ENCODE measurements at regions of chr3 and their contacts with region 1.

Region 1: DNA sequence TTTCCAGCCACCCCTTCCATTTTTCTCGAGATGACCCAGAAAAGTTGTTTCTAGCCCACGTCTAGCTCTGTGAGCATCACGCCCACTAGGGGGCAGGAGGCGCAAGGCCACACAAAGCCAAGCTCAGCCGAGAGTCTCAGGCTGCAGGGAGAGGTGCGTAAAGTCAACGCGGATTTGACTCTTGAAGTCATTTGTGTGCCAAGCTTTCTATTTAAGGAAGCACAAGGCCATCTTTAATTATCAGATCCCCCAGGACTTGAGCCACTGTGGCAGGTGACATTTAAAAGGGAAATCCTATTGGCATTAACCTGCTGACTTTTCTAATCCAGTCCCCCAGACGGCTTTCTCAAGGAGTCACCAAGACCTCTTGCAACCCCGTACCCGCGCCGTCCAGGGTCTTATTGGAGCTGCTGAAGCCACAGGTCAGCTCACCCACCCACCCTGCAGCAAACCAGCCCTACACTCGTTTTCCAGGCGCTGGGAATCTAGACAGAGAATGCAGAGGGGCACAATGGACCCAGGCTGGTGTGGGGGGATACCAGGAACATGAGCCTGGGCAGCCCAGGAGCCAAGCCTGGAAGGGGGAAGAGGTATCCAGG is 62.1 kb downstream of the CAPN7 start:
- DNase-seq: peak; percentile 69 to 92 (median 87)
- ATAC-seq: peak; percentile 50
- H3K4me3 ChIP-seq: no peak overlapping the region
- H3K4me3 Mint-ChIP-seq: no peak overlapping the region
- H3K27ac ChIP-seq: peak overlapping the region in 1 of 2 experiments; percentile 77
- H3K27ac Mint-ChIP-seq: no peak overlapping the region
- H3K4me1 ChIP-seq: peaks cover 64% of the 10 kb centered on the region
- H3K4me1 Mint-ChIP-seq: peaks cover 57% of the 10 kb centered on the region
- H3K27me3 ChIP-seq: no peaks in the 10 kb centered on the region
- H3K27me3 Mint-ChIP-seq: no peaks in the 10 kb centered on the region
- CTCF ChIP-seq: peak; percentile 83

Region 2: GRCh38 chr3:15205934-15206661 is 62.0 kb before region 1 on chr3 and contains the start of gene CAPN7:
- CTCF ChIA-PET with region 1: interaction called, 22 read pairs
- POLR2A ChIA-PET with region 1: interaction called, 10 read pairs
- intact Hi-C with region 1: loop called (anchors 1 to 2 kb)
- DNase-seq: peak; percentile 88 to 98 (median 93)
- ATAC-seq: peak; percentile 91
- H3K4me3 ChIP-seq: peak within 1 kb of the TSS; percentile 79 to 82
- H3K4me3 Mint-ChIP-seq: peak within 1 kb of the TSS; percentile 89
- H3K27ac ChIP-seq: peak within 1 kb of the TSS; percentile 85 to 88
- H3K27ac Mint-ChIP-seq: peak within 1 kb of the TSS; percentile 87
- H3K4me1 ChIP-seq: peaks cover 21% of the 10 kb centered on the region
- H3K4me1 Mint-ChIP-seq: peaks cover 32% of the 10 kb centered on the region
- H3K27me3 ChIP-seq: no peaks in the 10 kb centered on the region
- H3K27me3 Mint-ChIP-seq: no peaks in the 10 kb centered on the region
- CTCF ChIP-seq: no peak
- total RNA-seq, gene CAPN7: 59.7 to 62.6 TPM

Region 3: GRCh38 chr3:15309662-15310335 is 41.7 kb after region 1 on chr3:
- CTCF ChIA-PET with region 1: interaction called, 16 read pairs
- POLR2A ChIA-PET with region 1: no interaction called
- intact Hi-C with region 1: loop called (anchors 5 kb)
- DNase-seq: peak in 1 of 9 experiments; percentile 17
- ATAC-seq: no peak
- H3K4me3 ChIP-seq: no peak overlapping the region
- H3K4me3 Mint-ChIP-seq: no peak overlapping the region
- H3K27ac ChIP-seq: peak overlapping the region in 1 of 2 experiments; percentile 37
- H3K27ac Mint-ChIP-seq: no peak overlapping the region
- H3K4me1 ChIP-seq: peaks cover 33% of the 10 kb centered on the region
- H3K4me1 Mint-ChIP-seq: peaks cover 55% of the 10 kb centered on the region
- H3K27me3 ChIP-seq: no peaks in the 10 kb centered on the region
- H3K27me3 Mint-ChIP-seq: no peaks in the 10 kb centered on the region
- CTCF ChIP-seq: no peak

Region 4: GRCh38 chr3:15332405-15333098 is 64.4 kb after region 1 on chr3 and contains the start of gene SH3BP5:
- CTCF ChIA-PET with region 1: interaction called, 127 read pairs
- POLR2A ChIA-PET with region 1: interaction called, 16 read pairs
- intact Hi-C with region 1: loop called (anchors 1 kb)
- DNase-seq: peak; percentile 46 to 86 (median 75)
- ATAC-seq: peak; percentile 91
- H3K4me3 ChIP-seq: peak within 1 kb of the TSS; percentile 93 to 97
- H3K4me3 Mint-ChIP-seq: peak within 1 kb of the TSS; percentile 91
- H3K27ac ChIP-seq: peak within 1 kb of the TSS; percentile 60 to 67
- H3K27ac Mint-ChIP-seq: peak within 1 kb of the TSS; percentile 90
- H3K4me1 ChIP-seq: peaks cover 37% of the 10 kb centered on the region
- H3K4me1 Mint-ChIP-seq: peaks cover 50% of the 10 kb centered on the region
- H3K27me3 ChIP-seq: no peaks in the 10 kb centered on the region
- H3K27me3 Mint-ChIP-seq: no peaks in the 10 kb centered on the region
- CTCF ChIP-seq: peak; percentile 76
- total RNA-seq, gene SH3BP5: 4.4 to 5.9 TPM

Region 5: DNA sequence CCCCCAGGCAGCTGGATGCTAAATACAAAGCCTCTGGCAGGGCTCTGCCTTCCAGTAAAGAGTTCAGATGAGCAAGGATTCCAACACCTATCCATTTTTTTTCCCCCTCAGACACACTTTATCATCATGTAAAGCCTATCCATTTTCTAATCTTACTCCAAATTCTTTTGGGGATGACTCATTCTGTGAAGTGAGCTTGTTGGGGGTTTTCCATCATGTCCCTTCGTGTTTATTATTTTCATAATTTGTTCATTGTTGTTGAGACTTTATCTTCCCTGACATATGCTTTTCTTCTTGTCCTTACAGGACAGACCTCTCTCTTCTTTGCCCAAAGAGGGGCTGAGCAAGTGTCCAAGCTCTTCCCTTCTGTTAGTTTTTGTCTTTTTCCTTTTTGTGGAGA is 98.9 kb after region 1 on chr3:
- CTCF ChIA-PET with region 1: interaction called, 12 read pairs
- POLR2A ChIA-PET with region 1: interaction called, 3 read pairs
- intact Hi-C with region 1: no loop called
- DNase-seq: no peak
- ATAC-seq: no peak
- H3K4me3 ChIP-seq: no peak overlapping the region
- H3K4me3 Mint-ChIP-seq: no peak overlapping the region
- H3K27ac ChIP-seq: no peak overlapping the region
- H3K27ac Mint-ChIP-seq: no peak overlapping the region
- H3K4me1 ChIP-seq: no peaks in the 10 kb centered on the region
- H3K4me1 Mint-ChIP-seq: peaks cover 12% of the 10 kb centered on the region
- H3K27me3 ChIP-seq: no peaks in the 10 kb centered on the region
- H3K27me3 Mint-ChIP-seq: no peaks in the 10 kb centered on the region
- CTCF ChIP-seq: no peak

Region 6: DNA sequence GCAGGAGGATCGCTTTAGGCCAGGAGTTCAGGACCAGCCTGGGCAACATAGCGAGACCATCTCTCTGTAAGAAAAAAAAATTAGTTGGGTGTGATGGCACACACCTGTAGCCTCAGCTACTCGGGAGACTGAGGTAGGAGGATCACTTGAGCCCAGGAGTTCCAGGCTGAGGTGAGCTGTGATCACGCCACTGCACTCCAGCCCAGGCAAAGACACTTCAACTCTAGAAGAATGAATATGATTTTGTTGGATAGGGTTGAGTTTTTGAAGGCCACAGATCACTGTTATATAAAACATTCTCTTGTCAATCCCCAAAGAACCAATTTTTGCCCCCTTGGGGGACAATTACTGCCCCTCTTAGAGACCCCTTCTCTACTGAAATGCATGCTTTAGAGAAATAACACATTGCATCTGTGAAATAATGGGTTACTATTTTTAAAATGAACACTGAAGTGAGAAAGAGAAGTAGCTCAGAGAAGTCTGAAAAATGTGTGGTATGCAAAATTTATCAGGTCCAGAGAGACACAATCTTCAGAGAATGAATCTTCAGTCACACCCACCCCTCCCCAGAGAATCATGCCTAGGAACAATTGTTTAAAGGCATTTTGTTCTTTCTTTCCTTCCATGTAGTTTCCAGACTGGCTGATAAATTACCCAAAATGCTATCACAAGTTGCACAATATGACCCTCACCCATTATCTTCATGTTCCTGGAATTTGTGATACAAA is 116.5 kb after region 1 on chr3:
- CTCF ChIA-PET with region 1: interaction called, 104 read pairs
- POLR2A ChIA-PET with region 1: interaction called, 8 read pairs
- intact Hi-C with region 1: no loop called
- DNase-seq: no peak
- ATAC-seq: no peak
- H3K4me3 ChIP-seq: no peak overlapping the region
- H3K4me3 Mint-ChIP-seq: no peak overlapping the region
- H3K27ac ChIP-seq: no peak overlapping the region
- H3K27ac Mint-ChIP-seq: no peak overlapping the region
- H3K4me1 ChIP-seq: no peaks in the 10 kb centered on the region
- H3K4me1 Mint-ChIP-seq: no peaks in the 10 kb centered on the region
- H3K27me3 ChIP-seq: no peaks in the 10 kb centered on the region
- H3K27me3 Mint-ChIP-seq: no peaks in the 10 kb centered on the region
- CTCF ChIP-seq: no peak

Region 7: DNA sequence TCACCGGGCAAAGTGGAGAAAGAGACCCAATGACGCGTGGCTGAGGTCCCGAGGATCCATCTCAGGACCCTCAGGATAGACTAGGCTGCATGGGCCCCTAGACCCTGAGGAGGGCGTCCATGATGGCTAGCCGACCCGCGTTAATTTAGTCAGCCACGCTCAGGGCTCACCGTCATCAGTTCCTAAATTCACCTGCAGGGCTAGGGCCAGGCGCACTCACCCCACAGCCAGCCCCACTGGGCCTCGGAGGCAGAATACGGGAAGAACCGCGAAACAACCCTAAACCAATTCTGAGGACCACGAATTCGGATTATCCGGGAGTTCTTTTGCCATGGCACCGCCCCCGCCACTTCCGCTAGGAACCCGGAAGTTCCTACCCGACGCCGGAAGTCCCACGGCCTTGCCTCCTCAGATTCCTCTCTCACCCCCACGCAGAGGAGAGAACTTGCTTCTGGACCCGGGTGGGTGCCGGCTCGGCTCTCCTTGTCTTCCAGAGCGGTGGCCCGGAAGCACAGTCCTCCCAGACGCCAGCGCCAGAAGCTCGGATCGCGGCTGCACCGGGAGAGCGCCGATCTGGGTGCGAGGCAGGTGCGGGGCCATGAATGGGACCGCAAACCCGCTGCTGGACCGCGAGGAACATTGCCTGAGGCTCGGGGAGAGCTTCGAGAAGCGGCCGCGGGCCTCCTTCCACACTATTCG is 159.2 kb after region 1 on chr3 and contains the starts of genes EAF1 and METTL6:
- CTCF ChIA-PET with region 1: interaction called, 18 read pairs
- POLR2A ChIA-PET with region 1: no interaction called
- intact Hi-C with region 1: loop called in 1 of 2 experiments (anchors 2 kb)
- DNase-seq: peak; percentile 64 to 90 (median 86)
- ATAC-seq: peak; percentile 82
- H3K4me3 ChIP-seq: peak within 1 kb of the TSS; percentile 87 to 96
- H3K4me3 Mint-ChIP-seq: peak within 1 kb of the TSS; percentile 99
- H3K27ac ChIP-seq: peak within 1 kb of the TSS; percentile 81
- H3K27ac Mint-ChIP-seq: peak within 1 kb of the TSS; percentile 98
- H3K4me1 ChIP-seq: peaks cover 43% of the 10 kb centered on the region
- H3K4me1 Mint-ChIP-seq: peaks cover 66% of the 10 kb centered on the region
- H3K27me3 ChIP-seq: no peaks in the 10 kb centered on the region
- H3K27me3 Mint-ChIP-seq: no peaks in the 10 kb centered on the region
- CTCF ChIP-seq: peak; percentile 24
- total RNA-seq, gene EAF1: 33.7 to 36.0 TPM
- total RNA-seq, gene METTL6: 4.1 to 4.9 TPM

Region 8: GRCh38 chr3:16140116-16140893 is 872.2 kb after region 1 on chr3:
- CTCF ChIA-PET with region 1: no interaction called
- POLR2A ChIA-PET with region 1: no interaction called
- intact Hi-C with region 1: no loop called
- DNase-seq: no peak
- ATAC-seq: no peak
- H3K4me3 ChIP-seq: no peak overlapping the region
- H3K4me3 Mint-ChIP-seq: no peak overlapping the region
- H3K27ac ChIP-seq: no peak overlapping the region
- H3K27ac Mint-ChIP-seq: no peak overlapping the region
- H3K4me1 ChIP-seq: no peaks in the 10 kb centered on the region
- H3K4me1 Mint-ChIP-seq: no peaks in the 10 kb centered on the region
- H3K27me3 ChIP-seq: no peaks in the 10 kb centered on the region
- H3K27me3 Mint-ChIP-seq: no peaks in the 10 kb centered on the region
- CTCF ChIP-seq: no peak

Region 9: DNA sequence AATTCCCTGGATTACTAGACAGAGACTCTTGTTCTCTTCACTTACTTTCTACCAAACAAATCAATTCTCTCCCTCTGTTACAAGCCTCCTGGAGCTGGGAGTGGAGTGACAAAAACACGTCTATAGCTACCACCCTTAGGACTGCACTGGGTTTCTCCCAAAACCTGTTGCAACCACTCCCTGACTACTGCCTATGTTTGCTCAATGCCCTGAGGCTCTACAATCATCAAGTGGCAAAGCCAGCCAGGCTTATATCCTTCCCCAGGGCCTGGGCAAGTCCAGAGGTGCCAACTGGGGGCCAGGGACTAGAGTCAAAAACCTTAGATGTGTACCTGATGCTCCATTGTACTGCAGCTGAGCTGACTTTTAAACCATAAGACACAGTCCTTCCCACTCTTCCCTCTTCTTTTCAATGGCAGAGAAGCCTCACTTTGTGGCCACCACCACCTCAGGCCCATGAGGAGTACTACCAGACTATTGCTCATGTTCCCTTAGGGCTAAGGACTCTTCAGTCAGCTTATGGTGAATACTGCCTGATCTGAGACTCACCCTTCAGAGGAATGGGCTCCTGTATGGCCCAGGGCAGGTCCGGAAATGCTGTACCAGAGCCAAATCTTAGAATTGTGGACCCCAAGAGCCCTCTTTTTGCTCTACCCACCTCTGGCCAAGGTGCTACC is 1491.2 kb after region 1 on chr3:
- CTCF ChIA-PET with region 1: no interaction called
- POLR2A ChIA-PET with region 1: no interaction called
- intact Hi-C with region 1: no loop called
- DNase-seq: no peak
- ATAC-seq: no peak
- H3K4me3 ChIP-seq: no peak overlapping the region
- H3K4me3 Mint-ChIP-seq: no peak overlapping the region
- H3K27ac ChIP-seq: no peak overlapping the region
- H3K27ac Mint-ChIP-seq: no peak overlapping the region
- H3K4me1 ChIP-seq: no peaks in the 10 kb centered on the region
- H3K4me1 Mint-ChIP-seq: no peaks in the 10 kb centered on the region
- H3K27me3 ChIP-seq: no peaks in the 10 kb centered on the region
- H3K27me3 Mint-ChIP-seq: no peaks in the 10 kb centered on the region
- CTCF ChIP-seq: no peak